Dorsolateral prefrontal cortex (tissue), 120 donors: ENCODE measurements at regions of chr12 and their contacts with region 1.

Region 1: GRCh38 chr12:29519585-29520182 is 22.2 kb upstream of the OVCH1 start:
- DNase-seq: peak in 1 of 10 donors; percentile 18
- H3K4me3 ChIP-seq: no peak overlapping the region
- H3K27ac ChIP-seq: peak overlapping the region in 2 of 59 donors; percentile 9 to 17
- H3K27me3 ChIP-seq: no peaks in the 10 kb centered on the region
- CTCF ChIP-seq: peak; percentile 53 to 87 (median 76)

Region 2: GRCh38 chr12:29437575-29437974 is 82.1 kb before region 1 on chr12:
- intact Hi-C with region 1: no loop called
- DNase-seq: no peak
- H3K4me3 ChIP-seq: no peak overlapping the region
- H3K27ac ChIP-seq: no peak overlapping the region
- H3K27me3 ChIP-seq: no peaks in the 10 kb centered on the region
- CTCF ChIP-seq: no peak

Region 3: GRCh38 chr12:29455087-29455486 is 64.6 kb before region 1 on chr12:
- intact Hi-C with region 1: loop called in 1 of 2 experiments (anchors 5 kb)
- DNase-seq: peak in 9 of 10 donors; percentile 31 to 73 (median 47)
- H3K4me3 ChIP-seq: peak overlapping the region in 27 of 59 donors; percentile 0 to 48 (median 20)
- H3K27ac ChIP-seq: peak overlapping the region in 57 of 59 donors; percentile 5 to 97 (median 83)
- H3K27me3 ChIP-seq: no peaks in the 10 kb centered on the region
- CTCF ChIP-seq: peak in 3 of 56 donors; percentile 7 to 20 (median 17)

Region 4: GRCh38 chr12:29492891-29493290 is 26.8 kb before region 1 on chr12:
- intact Hi-C with region 1: no loop called
- DNase-seq: no peak
- H3K4me3 ChIP-seq: no peak overlapping the region
- H3K27ac ChIP-seq: no peak overlapping the region
- H3K27me3 ChIP-seq: no peaks in the 10 kb centered on the region
- CTCF ChIP-seq: no peak

Region 5: DNA sequence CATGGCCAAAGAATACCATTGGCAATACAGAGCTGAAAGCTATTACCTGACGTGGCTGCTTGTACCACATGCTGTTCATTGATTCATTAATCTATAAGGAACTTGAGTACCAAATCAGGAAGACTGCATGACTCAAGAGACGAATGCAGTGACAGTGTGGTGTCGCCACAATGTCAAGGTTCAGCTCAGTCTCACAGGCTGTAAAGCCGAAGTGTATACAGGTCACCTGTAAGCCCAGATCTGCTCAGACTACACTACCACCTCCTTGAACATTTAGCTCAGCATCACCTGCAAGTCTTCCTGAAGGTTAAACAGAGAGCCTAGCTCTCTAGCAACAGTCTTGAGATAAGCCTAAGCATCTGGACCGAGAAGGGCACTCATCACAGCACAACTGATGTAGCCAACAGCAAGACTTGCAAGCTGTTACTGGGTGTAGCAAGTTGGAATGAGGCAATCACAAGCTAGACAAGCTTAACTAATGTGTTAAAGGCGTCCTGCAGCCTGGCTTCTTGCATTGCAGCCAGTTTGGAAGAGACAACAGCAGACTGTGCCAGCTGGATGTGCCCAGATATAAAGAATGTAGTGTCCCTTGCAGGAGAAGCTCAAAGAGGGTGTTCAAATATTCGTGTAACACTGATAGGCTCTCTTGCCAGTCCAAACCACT is 243.1 kb after region 1 on chr12:
- intact Hi-C with region 1: no loop called
- DNase-seq: peak in 8 of 10 donors; percentile 6 to 75 (median 52)
- H3K4me3 ChIP-seq: no peak overlapping the region
- H3K27ac ChIP-seq: peak overlapping the region in 3 of 59 donors; percentile 17 to 32 (median 21)
- H3K27me3 ChIP-seq: peaks cover 0 to 19% (median 0%) of the 10 kb centered on the region in 45 donors
- CTCF ChIP-seq: no peak

Region 6: GRCh38 chr12:30806989-30807694 is 1287.5 kb after region 1 on chr12:
- intact Hi-C with region 1: loop called in 1 of 2 experiments (anchors 5 kb)
- DNase-seq: peak in 2 of 10 donors; percentile 35 to 45
- H3K4me3 ChIP-seq: no peak overlapping the region
- H3K27ac ChIP-seq: no peak overlapping the region
- H3K27me3 ChIP-seq: peaks cover 0 to 3% (median 0%) of the 10 kb centered on the region in 45 donors
- CTCF ChIP-seq: peak; percentile 45 to 82 (median 66)

Region 7: GRCh38 chr12:30839643-30840220 is 1320.0 kb after region 1 on chr12:
- intact Hi-C with region 1: loop called in 1 of 2 experiments (anchors 10 kb)
- DNase-seq: no peak
- H3K4me3 ChIP-seq: no peak overlapping the region
- H3K27ac ChIP-seq: no peak overlapping the region
- H3K27me3 ChIP-seq: peaks cover 0 to 26% (median 4%) of the 10 kb centered on the region in 45 donors
- CTCF ChIP-seq: no peak